K562 (cell line): ENCODE measurements at regions of chr12 and their contacts with region 1.

Region 1: GRCh38 chr12:1661553-1662335 is 29.1 kb upstream of the ADIPOR2 start:
- DNase-seq: peak; percentile 83 to 86 (median 86)
- ATAC-seq: peak; percentile 89
- H3K4me3 ChIP-seq: peak overlapping the region; percentile 39
- H3K27ac ChIP-seq: peak overlapping the region; percentile 54; the same call in 1 of the 3 replicates
- H3K4me1 ChIP-seq: peaks cover 19 to 20% of the 10 kb centered on the region in 2 experiments
- H3K27me3 ChIP-seq: no peaks in the 10 kb centered on the region
- CTCF ChIP-seq: no peak
- EP300 ChIP-seq: no peak
- POLR2A ChIP-seq: peak; percentile 72
- RAD21 ChIP-seq: no peak

Region 2: GRCh38 chr12:1690578-1691122 is 28.9 kb after region 1 on chr12 and contains the start of gene ADIPOR2:
- CTCF ChIA-PET with region 1: no interaction called
- POLR2A ChIA-PET with region 1: interaction called, 4 read pairs
- in situ Hi-C with region 1: no loop called
- intact Hi-C with region 1: loop called (anchors 2 kb)
- DNase-seq: peak; percentile 87 to 96 (median 92)
- ATAC-seq: peak; percentile 96
- H3K4me3 ChIP-seq: peak within 1 kb of the TSS; percentile 95
- H3K27ac ChIP-seq: peak within 1 kb of the TSS; percentile 92
- H3K4me1 ChIP-seq: peaks cover 0 to 4% of the 10 kb centered on the region in 2 experiments; a peak in 3 of 5 replicates
- H3K27me3 ChIP-seq: no peaks in the 10 kb centered on the region
- CTCF ChIP-seq: no peak
- EP300 ChIP-seq: no peak
- POLR2A ChIP-seq: peak; percentile 84
- RAD21 ChIP-seq: no peak
- polyA plus RNA-seq, gene ADIPOR2: 10.9 to 15.6 TPM